Heart left ventricle (tissue), 16 donors: ENCODE measurements at regions of chr19 and their contacts with region 1.

Region 1: DNA sequence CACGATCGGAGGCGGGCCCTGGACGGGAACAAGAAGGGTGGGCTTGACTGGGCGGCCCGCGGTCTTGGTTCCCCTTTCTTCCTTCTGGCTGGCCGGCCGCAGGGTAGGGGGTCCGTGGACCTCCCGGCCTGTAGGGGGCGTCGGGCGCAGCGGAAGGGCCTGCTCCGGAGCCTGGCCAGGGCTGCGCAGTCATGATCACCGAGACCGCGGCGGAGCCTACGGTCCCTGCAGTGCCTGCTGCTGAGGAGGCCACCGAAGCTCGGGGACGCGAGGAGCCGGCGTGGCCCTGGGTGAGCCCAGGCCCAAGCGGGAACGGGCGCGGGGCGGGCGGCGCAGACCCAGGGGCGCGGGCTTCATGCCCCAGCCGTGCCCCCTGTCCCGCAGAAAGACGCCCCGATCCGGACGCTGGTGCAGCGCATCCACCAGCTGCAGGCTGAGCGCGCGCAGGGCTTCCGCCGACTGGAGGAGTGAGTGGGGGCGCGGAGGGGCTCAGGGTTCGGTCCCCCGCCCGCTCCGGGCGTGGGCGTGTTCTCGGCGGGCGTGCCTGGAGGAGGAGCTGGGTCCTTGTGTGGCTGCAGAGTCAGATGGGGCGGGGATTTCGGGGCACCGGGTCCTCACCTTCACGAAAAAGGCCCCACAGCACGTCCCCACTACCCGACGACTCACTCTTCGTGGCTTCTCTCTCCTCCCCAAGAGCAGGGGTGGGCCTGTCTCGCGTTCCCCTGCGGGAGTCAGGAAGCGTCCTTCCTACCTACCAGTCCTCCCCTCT is at the start of gene REX1BD:
- DNase-seq: peak; percentile 87 to 94 (median 90)
- ATAC-seq: peak; percentile 83 to 94 (median 90)
- H3K4me3 ChIP-seq: peak within 1 kb of the TSS; percentile 66 to 98 (median 90)
- H3K27ac ChIP-seq: peak within 1 kb of the TSS; percentile 75 to 97 (median 92)
- H3K4me1 ChIP-seq: peaks cover 0 to 47% (median 19%) of the 10 kb centered on the region in 12 donors
- H3K27me3 ChIP-seq: no peaks in the 10 kb centered on the region
- CTCF ChIP-seq: peak; percentile 83 to 98 (median 92)
- POLR2A ChIP-seq: peak in 1 of 2 donors; percentile 70
- total RNA-seq, gene REX1BD: 42.9 to 205 (median 68.2) TPM

Region 2: DNA sequence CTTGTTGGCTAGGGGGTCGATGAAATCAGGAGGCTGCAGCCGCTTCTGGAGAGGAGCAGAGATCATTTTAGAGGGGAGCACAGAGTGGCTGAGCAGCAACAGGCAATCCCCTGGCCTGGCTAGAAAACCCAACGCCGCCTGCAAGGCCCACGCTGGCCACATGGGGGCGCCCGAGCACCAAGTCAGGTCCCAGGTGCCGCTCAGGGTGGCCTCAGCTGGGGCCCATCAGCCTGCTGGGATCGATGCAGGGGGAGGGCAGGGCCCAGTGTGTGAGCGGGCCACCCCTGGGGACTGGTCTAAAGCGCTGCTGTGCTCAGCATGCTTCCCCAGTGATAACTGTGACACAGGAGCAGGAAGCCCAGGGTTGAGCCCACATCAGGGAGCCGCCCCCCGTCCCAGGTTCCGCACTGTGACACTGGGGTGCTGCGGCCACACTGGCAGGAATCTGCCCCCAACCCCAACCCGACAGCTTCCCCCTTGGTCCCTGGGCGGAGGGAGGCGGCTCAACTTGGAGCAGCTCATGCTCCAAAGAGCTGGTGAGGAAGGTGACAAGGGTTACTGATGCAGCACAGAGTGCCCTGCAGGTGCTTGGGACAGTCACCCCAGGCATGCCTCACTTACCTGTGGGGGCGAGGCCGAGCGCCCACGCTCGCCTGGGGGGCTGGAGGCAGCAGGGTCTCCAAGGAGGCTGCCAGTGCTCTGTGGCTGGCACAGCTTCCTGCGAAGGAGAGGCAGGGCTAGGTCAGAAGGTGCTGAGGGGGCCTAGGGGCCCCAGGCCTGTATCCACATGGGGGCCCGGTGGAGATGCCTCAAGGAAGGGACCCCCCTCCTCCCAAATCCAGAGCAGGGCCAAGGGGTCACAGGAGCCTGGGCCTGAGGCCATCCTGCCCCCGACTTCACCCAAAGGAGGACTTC is 137.6 kb before region 1 on chr19:
- intact Hi-C with region 1: loop called in 3 of 10 experiments (anchors 5 to 10 kb)
- DNase-seq: peak; percentile 85 to 94 (median 88)
- ATAC-seq: peak; percentile 78 to 88 (median 86)
- H3K4me3 ChIP-seq: no peak overlapping the region
- H3K27ac ChIP-seq: peak overlapping the region in 1 of 12 donors; percentile 41
- H3K4me1 ChIP-seq: peaks cover 0 to 21% (median 8%) of the 10 kb centered on the region in 12 donors
- H3K27me3 ChIP-seq: no peaks in the 10 kb centered on the region
- CTCF ChIP-seq: peak; percentile 96 to 99 (median 98)
- POLR2A ChIP-seq: no peak

Region 3: GRCh38 chr19:18469069-18469846 is 119.5 kb before region 1 on chr19:
- intact Hi-C with region 1: loop called in 2 of 10 experiments (anchors 5 kb)
- DNase-seq: peak; percentile 58 to 85 (median 67)
- ATAC-seq: peak; percentile 5 to 42 (median 24)
- H3K4me3 ChIP-seq: no peak overlapping the region
- H3K27ac ChIP-seq: peak overlapping the region in 2 of 12 donors; percentile 13 to 43
- H3K4me1 ChIP-seq: peaks cover 13 to 72% (median 61%) of the 10 kb centered on the region in 12 donors
- H3K27me3 ChIP-seq: no peaks in the 10 kb centered on the region
- CTCF ChIP-seq: peak; percentile 61 to 86 (median 77)
- POLR2A ChIP-seq: no peak

Region 4: GRCh38 chr19:18644196-18645034 is 55.6 kb after region 1 on chr19:
- intact Hi-C with region 1: no loop called
- DNase-seq: no peak
- ATAC-seq: peak in 2 of 4 donors; percentile 63 to 71
- H3K4me3 ChIP-seq: peak overlapping the region in 8 of 12 donors; percentile 3 to 44 (median 30)
- H3K27ac ChIP-seq: peak overlapping the region in 8 of 12 donors; percentile 28 to 82 (median 52)
- H3K4me1 ChIP-seq: peaks cover 0 to 36% (median 17%) of the 10 kb centered on the region in 12 donors
- H3K27me3 ChIP-seq: no peaks in the 10 kb centered on the region
- CTCF ChIP-seq: no peak
- POLR2A ChIP-seq: no peak

Region 5: DNA sequence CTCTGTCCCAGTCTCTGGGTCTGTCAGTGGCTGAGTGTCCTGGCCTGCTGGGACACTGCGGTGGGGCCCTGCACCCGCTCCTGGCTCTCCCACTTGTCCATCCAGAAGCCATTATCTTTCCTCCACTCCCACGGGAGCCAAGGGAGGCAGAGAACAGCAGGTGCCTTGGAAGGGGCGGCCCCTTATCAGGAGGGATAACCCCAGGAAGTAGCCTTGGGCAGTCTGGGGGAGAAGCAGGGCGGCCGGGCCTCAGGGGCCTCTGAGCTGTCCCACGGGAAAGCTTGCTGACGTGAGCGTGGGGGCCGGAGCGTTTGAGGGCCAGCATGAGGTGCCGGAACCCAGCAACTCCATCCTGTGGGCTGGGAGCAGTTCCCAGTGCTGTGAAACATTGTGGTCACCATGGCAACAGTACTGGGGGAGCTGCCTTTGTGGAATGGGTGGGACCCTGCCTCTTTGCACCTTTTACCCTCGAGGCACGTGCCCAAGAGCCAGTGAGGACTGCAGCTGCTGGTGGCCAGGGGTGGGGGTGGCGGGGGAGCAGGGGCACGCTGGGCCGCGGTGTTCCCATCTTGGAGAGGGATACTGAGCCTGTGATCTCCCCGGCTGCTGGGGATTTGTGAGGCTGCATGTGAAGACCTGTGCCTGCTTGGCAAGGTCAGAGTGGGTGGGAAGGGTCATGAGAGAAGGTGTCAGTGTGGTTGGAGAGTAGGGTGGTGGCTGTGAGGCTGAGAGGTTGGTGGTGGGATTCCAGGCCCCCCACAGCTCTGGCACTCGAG is 69.0 kb after region 1 on chr19:
- intact Hi-C with region 1: loop called in 1 of 10 experiments (anchors 10 kb)
- DNase-seq: peak; percentile 78 to 85 (median 83)
- ATAC-seq: peak; percentile 20 to 79 (median 49)
- H3K4me3 ChIP-seq: no peak overlapping the region
- H3K27ac ChIP-seq: peak overlapping the region in 9 of 12 donors; percentile 67 to 95 (median 82)
- H3K4me1 ChIP-seq: peaks cover 0 to 49% (median 35%) of the 10 kb centered on the region in 12 donors
- H3K27me3 ChIP-seq: no peaks in the 10 kb centered on the region
- CTCF ChIP-seq: no peak
- POLR2A ChIP-seq: no peak

Region 6: GRCh38 chr19:18675779-18676178 is 87.0 kb after region 1 on chr19:
- intact Hi-C with region 1: loop called in 6 of 10 experiments (anchors 5 to 10 kb)
- DNase-seq: no peak
- ATAC-seq: no peak
- H3K4me3 ChIP-seq: no peak overlapping the region
- H3K27ac ChIP-seq: no peak overlapping the region
- H3K4me1 ChIP-seq: peaks cover 0 to 23% (median 9%) of the 10 kb centered on the region in 12 donors
- H3K27me3 ChIP-seq: no peaks in the 10 kb centered on the region
- CTCF ChIP-seq: peak in 9 of 12 donors; percentile 18 to 49 (median 35)
- POLR2A ChIP-seq: no peak

Region 7: DNA sequence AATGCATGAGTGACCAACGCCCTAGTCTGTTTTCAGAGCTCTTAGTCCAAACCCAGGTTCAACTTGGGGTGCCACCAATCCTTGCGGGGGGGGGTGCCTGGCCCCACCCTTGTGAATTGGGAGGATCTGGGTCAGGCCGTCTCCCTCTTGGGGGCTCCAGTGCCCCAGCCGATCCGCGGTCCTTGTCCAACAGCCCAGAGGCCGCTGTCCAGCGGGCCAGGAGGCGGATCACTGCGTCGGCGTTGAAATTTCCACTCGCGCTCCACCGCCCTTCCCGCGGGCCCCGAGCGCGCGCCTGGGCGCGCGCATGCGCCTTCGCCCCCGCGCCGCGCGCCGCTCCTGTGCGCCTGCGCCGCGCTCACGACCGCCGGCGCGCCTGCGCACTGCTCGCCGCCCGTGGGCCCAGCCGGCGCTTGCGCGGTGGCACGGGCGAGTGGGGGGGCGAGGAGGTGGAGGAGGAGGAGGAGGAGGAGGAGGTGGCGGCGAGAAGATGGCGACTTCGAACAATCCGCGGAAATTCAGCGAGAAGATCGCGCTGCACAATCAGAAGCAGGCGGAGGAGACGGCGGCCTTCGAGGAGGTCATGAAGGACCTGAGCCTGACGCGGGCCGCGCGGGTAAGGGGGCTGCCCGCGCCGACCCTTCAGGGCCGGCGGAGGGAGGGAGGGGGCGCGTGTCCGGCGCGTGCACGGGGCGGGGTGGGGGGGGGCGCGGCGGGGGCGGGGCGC is 94.6 kb after region 1 on chr19 and contains the start of gene CRTC1:
- intact Hi-C with region 1: loop called in 5 of 10 experiments (anchors 5 to 10 kb)
- DNase-seq: peak; percentile 91 to 95 (median 92)
- ATAC-seq: peak; percentile 89 to 92 (median 91)
- H3K4me3 ChIP-seq: peak within 1 kb of the TSS; percentile 25 to 75 (median 64)
- H3K27ac ChIP-seq: peak within 1 kb of the TSS in 11 of 12 donors; percentile 77 to 91 (median 86)
- H3K4me1 ChIP-seq: peaks cover 4 to 28% (median 12%) of the 10 kb centered on the region in 12 donors
- H3K27me3 ChIP-seq: no peaks in the 10 kb centered on the region
- CTCF ChIP-seq: peak in 3 of 12 donors; percentile 7 to 19 (median 10)
- POLR2A ChIP-seq: peak in 1 of 2 donors; percentile 71
- total RNA-seq, gene CRTC1: 3.8 to 10.2 (median 8.2) TPM

Region 8: DNA sequence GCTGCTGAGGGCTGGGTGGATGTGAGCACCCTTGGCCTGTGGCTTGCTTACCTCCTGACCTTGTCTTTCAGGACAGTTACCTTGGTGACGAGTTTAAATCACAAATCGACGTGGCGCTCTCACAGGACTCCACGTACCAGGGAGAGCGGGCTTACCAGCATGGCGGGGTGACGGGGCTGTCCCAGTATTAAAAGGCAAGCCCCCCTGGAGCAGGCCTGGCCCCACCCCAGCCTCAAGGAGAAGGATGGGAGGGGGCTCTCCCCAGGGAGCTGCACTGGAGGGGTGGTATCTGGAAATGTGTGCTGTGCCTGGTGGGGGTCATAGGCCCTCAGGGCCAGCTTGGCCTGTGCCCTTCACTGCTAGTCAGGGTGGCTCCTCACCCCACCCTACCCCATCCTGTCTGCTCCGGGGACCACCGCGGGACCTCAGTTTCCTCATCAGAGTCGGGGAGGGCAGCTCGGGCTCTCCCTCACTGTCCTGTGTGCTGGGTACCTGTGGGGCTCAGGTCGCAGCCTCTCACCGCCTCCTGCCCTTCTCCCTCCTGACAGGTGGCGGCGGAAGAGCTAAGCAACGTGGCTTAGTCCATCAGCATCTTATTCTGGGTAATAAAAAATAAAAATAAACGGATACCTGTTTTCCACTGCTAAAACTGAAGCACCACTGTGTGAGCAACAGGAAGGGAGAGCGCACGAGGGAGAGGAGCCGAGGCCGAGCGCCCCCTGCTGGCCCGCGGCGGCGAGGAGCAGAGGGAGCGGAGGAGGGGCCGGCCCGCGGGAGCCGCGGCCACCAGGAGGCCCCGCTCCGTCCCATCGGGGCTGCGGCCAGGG is 277.4 kb after region 1 on chr19:
- intact Hi-C with region 1: loop called in 1 of 10 experiments (anchors 5 kb)
- DNase-seq: peak in 4 of 5 donors; percentile 53 to 69 (median 62)
- ATAC-seq: peak; percentile 38 to 86 (median 79)
- H3K4me3 ChIP-seq: peak overlapping the region in 1 of 12 donors; percentile 7
- H3K27ac ChIP-seq: no peak overlapping the region
- H3K4me1 ChIP-seq: peaks cover 2 to 36% (median 10%) of the 10 kb centered on the region in 12 donors
- H3K27me3 ChIP-seq: peaks cover 0 to 14% (median 6%) of the 10 kb centered on the region in 9 donors
- CTCF ChIP-seq: peak; percentile 94 to 100 (median 98)
- POLR2A ChIP-seq: peak in 1 of 2 donors; percentile 9